Activated CD4-positive, alpha-beta T cell treated with anti-CD3 and anti-CD28 coated beads, Interleukin-2, amount 10 ng/mL, durations not matched to agents 7 days and 5 days (primary cell): ENCODE measurements at regions of chr1 and their contacts with region 1.

Region 1: DNA sequence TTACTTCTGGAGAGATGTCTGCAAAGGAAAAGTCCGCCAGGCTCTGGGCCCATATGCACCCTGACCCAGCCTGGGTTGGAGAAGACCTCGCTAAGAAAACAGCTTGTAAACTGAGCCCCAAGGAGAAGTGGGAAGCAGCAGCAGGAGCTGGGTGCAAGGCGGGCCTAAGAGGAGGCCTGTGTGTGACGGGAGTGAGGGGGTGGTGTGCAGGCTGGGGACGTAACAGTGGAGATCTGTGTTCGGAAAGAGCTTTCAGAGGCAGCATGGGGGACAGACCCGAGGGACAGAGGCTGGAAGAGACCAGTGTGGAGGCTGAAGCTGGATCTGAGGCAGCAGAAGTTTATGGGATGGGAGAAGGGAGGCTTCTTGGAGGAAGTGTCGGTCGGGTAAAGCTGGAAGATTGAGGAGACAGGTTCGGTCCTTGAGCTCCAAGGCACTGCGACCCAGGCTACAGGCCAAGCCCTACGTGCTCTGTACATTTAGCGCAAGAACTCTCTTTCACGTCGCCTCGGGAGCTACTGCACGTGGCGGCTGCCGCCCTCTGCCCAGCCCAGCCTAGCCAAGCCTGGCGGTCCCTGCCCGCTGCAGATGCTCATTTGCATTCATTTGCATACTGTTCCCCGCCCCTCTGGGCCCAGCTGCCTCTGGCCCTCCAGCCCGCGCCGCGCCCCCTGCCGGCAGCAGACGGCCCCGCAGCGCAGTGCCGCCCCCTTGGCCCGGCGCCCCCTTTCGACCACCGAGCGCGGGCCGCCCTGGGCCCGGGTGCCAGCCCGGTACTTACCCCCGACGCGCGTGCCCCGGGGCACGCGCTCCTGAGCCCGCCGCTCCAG is 6.3 kb downstream of the HPCA start:
- DNase-seq: no peak
- H3K4me3 Mint-ChIP-seq: no peak overlapping the region
- H3K27ac Mint-ChIP-seq: no peak overlapping the region
- H3K4me1 Mint-ChIP-seq: peaks cover 6% of the 10 kb centered on the region
- H3K27me3 Mint-ChIP-seq: peaks cover 53% of the 10 kb centered on the region

Region 2: GRCh38 chr1:32876341-32877210 is 16.0 kb before region 1 on chr1:
- CTCF ChIA-PET with region 1: interaction called, 11 read pairs
- POLR2A ChIA-PET with region 1: no interaction called
- DNase-seq: peak; percentile 72
- H3K4me3 Mint-ChIP-seq: no peak overlapping the region
- H3K27ac Mint-ChIP-seq: no peak overlapping the region
- H3K4me1 Mint-ChIP-seq: no peaks in the 10 kb centered on the region
- H3K27me3 Mint-ChIP-seq: peaks cover 42% of the 10 kb centered on the region

Region 3: GRCh38 chr1:32939655-32940371 is 47.2 kb after region 1 on chr1:
- CTCF ChIA-PET with region 1: no interaction called
- POLR2A ChIA-PET with region 1: no interaction called
- DNase-seq: no peak
- H3K4me3 Mint-ChIP-seq: no peak overlapping the region
- H3K27ac Mint-ChIP-seq: no peak overlapping the region
- H3K4me1 Mint-ChIP-seq: peaks cover 55% of the 10 kb centered on the region
- H3K27me3 Mint-ChIP-seq: no peaks in the 10 kb centered on the region